Prostate gland (tissue), 2 donors: ENCODE measurements at regions of chr20 and their contacts with region 1.

Region 1: DNA sequence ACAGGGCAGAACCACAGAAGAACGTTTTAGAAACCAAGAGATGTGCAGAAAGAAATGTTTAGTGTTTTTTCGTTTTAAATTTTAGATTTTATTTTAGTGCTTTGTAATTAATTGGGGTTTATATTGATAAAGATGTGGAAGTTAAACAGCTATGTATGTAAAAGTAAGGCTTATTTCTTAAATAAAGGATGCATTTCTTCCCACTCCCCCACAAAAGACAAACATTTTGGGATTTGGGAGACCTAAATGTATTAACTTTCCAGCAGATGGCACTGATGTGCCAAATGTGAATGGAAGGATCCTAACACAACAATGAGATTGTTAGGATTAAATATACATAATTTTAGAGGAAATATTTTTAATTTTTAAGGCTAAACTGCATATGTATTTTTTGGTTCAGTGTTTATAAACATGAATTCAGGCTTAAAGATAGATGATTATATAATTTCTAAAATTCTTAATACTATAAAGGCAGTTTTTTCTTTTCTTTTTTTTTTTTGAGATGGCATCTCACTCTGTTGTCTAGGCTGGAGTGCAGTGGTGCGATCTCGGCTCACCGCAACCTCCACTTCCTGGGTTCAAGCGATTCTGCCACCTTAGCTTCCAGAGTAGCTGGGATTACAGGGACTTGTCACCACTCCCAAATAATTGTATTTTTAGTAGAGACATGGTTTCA is 12.0 kb downstream of the PFDN4 start:
- DNase-seq: no peak
- H3K4me3 ChIP-seq: no peak overlapping the region
- H3K27ac ChIP-seq: no peak overlapping the region
- H3K4me1 ChIP-seq: no peaks in the 10 kb centered on the region
- H3K27me3 ChIP-seq: no peaks in the 10 kb centered on the region
- CTCF ChIP-seq: peak in 3 of 4 experiments; percentile 42 to 55 (median 43)
- POLR2A ChIP-seq: no peak

Region 2: GRCh38 chr20:54649511-54649962 is 429.6 kb after region 1 on chr20:
- intact Hi-C with region 1: loop called (anchors 2 kb)
- DNase-seq: peak; percentile 80
- H3K4me3 ChIP-seq: no peak overlapping the region
- H3K27ac ChIP-seq: no peak overlapping the region
- H3K4me1 ChIP-seq: no peaks in the 10 kb centered on the region
- H3K27me3 ChIP-seq: no peaks in the 10 kb centered on the region
- CTCF ChIP-seq: peak; percentile 70 to 76 (median 74)
- POLR2A ChIP-seq: no peak